OCI-LY7 (cell line): ENCODE measurements at regions of chr14 and their contacts with region 1.

Region 1: GRCh38 chr14:67599698-67600561 is at the start of gene PIGH:
- DNase-seq: peak; percentile 91
- H3K4me3 ChIP-seq: peak within 1 kb of the TSS; percentile 79
- H3K27ac ChIP-seq: no peak within 1 kb of the TSS
- H3K4me1 ChIP-seq: peaks cover 22% of the 10 kb centered on the region
- CTCF ChIP-seq: peak; percentile 75
- total RNA-seq, gene PIGH: 19.7 and 23.0 TPM in 2 replicates

Region 2: DNA sequence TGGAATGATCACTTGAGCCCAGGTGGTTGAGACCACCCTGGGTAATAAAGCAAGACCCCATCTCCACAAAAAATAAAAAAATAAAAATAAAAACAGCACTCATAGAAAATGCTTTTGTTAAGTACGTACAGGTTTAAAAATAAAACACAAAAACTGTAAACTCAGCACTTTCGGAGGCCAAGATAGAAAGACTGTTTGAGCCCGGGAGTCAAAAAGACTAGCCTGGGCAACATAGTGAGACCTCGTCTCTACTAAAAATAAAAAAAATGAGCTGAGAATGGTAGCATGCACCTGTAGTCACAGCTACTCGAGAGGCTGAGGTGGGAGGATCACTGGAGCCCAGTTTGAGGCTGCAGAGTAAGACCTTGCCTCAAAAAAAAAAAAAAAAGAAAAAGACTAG is 247.9 kb before region 1 on chr14:
- CTCF ChIA-PET with region 1: no interaction called
- POLR2A ChIA-PET with region 1: no interaction called
- intact Hi-C with region 1: no loop called
- DNase-seq: no peak
- H3K4me3 ChIP-seq: no peak overlapping the region
- H3K27ac ChIP-seq: no peak overlapping the region
- H3K4me1 ChIP-seq: no peaks in the 10 kb centered on the region
- CTCF ChIP-seq: no peak

Region 3: DNA sequence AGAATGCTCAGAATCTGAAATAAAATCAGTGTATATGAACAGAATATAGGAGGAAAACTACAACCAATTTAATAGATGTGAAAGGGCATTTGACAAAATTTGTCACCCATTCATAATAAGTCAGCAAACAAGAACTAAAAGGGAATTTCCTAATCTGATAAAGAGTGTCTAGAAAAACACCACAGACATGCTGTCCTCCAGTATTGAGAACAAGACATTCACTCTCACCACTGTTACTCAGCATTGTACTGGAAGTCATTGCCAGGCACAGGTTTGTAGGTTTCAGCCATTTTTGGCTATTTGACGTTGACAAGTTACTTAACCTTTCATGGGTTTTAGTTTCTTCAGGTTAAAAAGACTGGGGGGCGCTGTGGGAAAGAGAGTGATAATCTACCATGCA is 226.6 kb before region 1 on chr14:
- CTCF ChIA-PET with region 1: no interaction called
- POLR2A ChIA-PET with region 1: no interaction called
- intact Hi-C with region 1: no loop called
- DNase-seq: no peak
- H3K4me3 ChIP-seq: no peak overlapping the region
- H3K27ac ChIP-seq: no peak overlapping the region
- H3K4me1 ChIP-seq: no peaks in the 10 kb centered on the region
- CTCF ChIP-seq: 0 out of 2 replicates have a peak, but pooled peaks have one; percentile 13

Region 4: GRCh38 chr14:67619446-67620216 is 19.7 kb after region 1 on chr14 and contains the start of gene ARG2:
- CTCF ChIA-PET with region 1: no interaction called
- POLR2A ChIA-PET with region 1: interaction called, 9 read pairs
- intact Hi-C with region 1: loop called (anchors 1 kb)
- DNase-seq: peak; percentile 85
- H3K4me3 ChIP-seq: peak within 1 kb of the TSS; percentile 70
- H3K27ac ChIP-seq: no peak within 1 kb of the TSS
- H3K4me1 ChIP-seq: peaks cover 25% of the 10 kb centered on the region
- CTCF ChIP-seq: no peak; the same call in 1 of the 2 replicates
- total RNA-seq, gene ARG2: 2.9 and 4.2 TPM in 2 replicates

Region 5: DNA sequence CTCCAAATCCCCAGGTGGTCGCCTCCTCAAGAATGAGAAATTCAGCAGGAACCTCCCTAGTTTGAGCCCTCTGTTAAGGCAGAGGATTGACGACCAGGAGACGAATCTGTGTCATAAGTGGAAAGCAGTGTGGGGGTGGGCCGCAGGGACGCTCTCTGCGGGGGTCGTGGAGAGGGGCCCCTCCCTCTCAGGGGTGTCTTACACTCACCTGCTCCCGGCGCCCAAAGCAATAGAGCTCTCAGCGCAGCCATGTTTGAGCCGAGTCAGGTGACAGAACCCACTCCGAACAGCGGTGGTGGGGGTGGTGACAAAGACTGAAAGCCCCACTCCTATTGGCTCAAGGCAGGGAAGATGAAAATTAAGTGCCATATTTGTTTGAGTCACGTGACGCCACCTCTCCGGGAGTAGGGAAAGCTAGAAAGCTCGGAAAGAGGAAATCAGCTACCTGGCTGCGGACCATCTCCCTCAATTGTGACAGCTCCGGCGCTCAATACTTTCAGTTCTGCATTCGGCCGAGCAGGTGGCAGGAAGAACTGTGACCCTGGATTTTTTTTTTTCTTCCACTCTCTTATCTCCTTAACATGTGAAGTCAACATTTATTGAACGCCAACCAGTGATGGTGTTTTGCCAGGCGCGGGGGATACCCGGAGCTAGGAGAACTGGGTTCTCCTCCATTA is 216.5 kb after region 1 on chr14 and contains the start of gene ZFYVE26:
- CTCF ChIA-PET with region 1: no interaction called
- POLR2A ChIA-PET with region 1: no interaction called
- intact Hi-C with region 1: loop called (anchors 10 kb)
- DNase-seq: peak; percentile 99
- H3K4me3 ChIP-seq: peak within 1 kb of the TSS; percentile 79
- H3K27ac ChIP-seq: peak within 1 kb of the TSS; percentile 99
- H3K4me1 ChIP-seq: peaks cover 52% of the 10 kb centered on the region
- CTCF ChIP-seq: no peak
- total RNA-seq, gene ZFYVE26: 12.0 and 16.3 TPM in 2 replicates